Psoas muscle (tissue), 8 donors: ENCODE measurements at regions of chr2 and their contacts with region 1.

Region 1: GRCh38 chr2:102187496-102188150 is 800 bp downstream of the IL1RL2 start:
- DNase-seq: peak; percentile 70 to 81
- ATAC-seq: peak; percentile 81 to 93 (median 86)
- H3K4me3 ChIP-seq: peak overlapping the region; percentile 75
- H3K27ac ChIP-seq: peak overlapping the region; percentile 55
- H3K4me1 ChIP-seq: no peaks in the 10 kb centered on the region
- H3K27me3 ChIP-seq: no peaks in the 10 kb centered on the region
- CTCF ChIP-seq: peak; percentile 37

Region 2: GRCh38 chr2:101770726-101771125 is 416.9 kb before region 1 on chr2:
- intact Hi-C with region 1: no loop called
- DNase-seq: no peak
- ATAC-seq: peak; percentile 64 to 84 (median 74)
- H3K4me3 ChIP-seq: no peak overlapping the region
- H3K27ac ChIP-seq: no peak overlapping the region
- H3K4me1 ChIP-seq: peaks cover 71% of the 10 kb centered on the region
- H3K27me3 ChIP-seq: no peaks in the 10 kb centered on the region
- CTCF ChIP-seq: peak; percentile 32

Region 3: GRCh38 chr2:102235491-102235890 is 47.9 kb after region 1 on chr2:
- intact Hi-C with region 1: loop called (anchors 5 kb)
- DNase-seq: no peak
- ATAC-seq: peak in 3 of 4 donors; percentile 64 to 70 (median 68)
- H3K4me3 ChIP-seq: no peak overlapping the region
- H3K27ac ChIP-seq: no peak overlapping the region
- H3K4me1 ChIP-seq: no peaks in the 10 kb centered on the region
- H3K27me3 ChIP-seq: no peaks in the 10 kb centered on the region
- CTCF ChIP-seq: peak; percentile 13

Region 4: GRCh38 chr2:102240640-102241370 is 53.2 kb after region 1 on chr2:
- intact Hi-C with region 1: loop called (anchors 5 kb)
- DNase-seq: peak; percentile 90 to 96
- ATAC-seq: peak; percentile 96 to 99 (median 98)
- H3K4me3 ChIP-seq: no peak overlapping the region
- H3K27ac ChIP-seq: peak overlapping the region; percentile 41
- H3K4me1 ChIP-seq: no peaks in the 10 kb centered on the region
- H3K27me3 ChIP-seq: no peaks in the 10 kb centered on the region
- CTCF ChIP-seq: peak; percentile 99